ENCODE measurements at regions of chr4 and their contacts with region 1.

Region 1: GRCh38 chr4:186676531-186677161 is 47.0 kb downstream of the FAT1 start:
- DNase-seq: no peak
- ATAC-seq: no peak
- H3K4me3 Mint-ChIP-seq: no peak overlapping the region
- H3K27ac Mint-ChIP-seq: no peak overlapping the region
- H3K4me1 Mint-ChIP-seq: no peaks in the 10 kb centered on the region
- H3K27me3 Mint-ChIP-seq: peaks cover 0 to 1% (median 0%) of the 10 kb centered on the region in 5 donors

Region 2: DNA sequence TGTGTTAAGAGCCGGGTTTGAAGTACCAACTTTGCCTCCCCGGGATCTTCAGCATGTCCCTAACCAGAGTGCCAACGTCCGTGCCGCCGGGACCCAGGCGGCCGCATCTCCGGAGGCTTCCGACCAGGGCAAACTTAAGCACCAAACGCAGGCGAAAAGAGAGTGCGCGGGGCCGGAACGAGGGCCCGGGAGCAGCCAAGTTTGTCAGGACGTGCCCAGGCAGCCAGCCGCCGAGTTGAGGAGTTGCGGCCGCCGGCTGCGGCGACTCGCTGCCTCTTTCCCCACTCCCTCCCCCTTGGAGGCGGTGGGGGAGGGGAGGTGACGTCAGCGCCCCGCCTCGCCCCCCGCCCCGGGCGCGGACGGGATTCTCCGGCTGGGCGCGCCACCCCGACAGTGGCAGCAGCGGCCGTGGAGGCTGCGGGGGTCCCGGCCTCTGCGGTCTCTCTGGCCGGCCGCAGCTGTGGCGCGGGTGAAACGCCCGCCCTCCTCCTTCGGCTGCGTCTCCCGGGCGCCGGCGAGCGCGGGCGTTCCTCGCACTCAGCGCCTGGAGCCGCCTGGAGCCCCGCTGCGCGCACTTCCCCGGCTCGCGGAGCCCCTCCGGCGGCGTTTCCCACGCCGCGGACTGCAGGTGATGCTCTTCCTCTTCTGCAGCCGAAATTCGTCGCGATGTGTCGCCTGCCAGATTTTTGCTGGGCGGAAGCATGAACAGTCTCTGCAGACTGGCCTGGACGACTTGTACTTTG is 50.0 kb after region 1 on chr4:
- POLR2A ChIA-PET with region 1: interaction called, 10 read pairs
- DNase-seq: no peak
- ATAC-seq: no peak
- H3K4me3 Mint-ChIP-seq: peak overlapping the region in 8 of 10 donors; percentile 28 to 67 (median 56)
- H3K27ac Mint-ChIP-seq: no peak overlapping the region
- H3K4me1 Mint-ChIP-seq: peaks cover 0 to 20% (median 13%) of the 10 kb centered on the region in 4 donors
- H3K27me3 Mint-ChIP-seq: peaks cover 27 to 57% (median 51%) of the 10 kb centered on the region in 5 donors

Measured in naive thymus-derived CD8-positive, alpha-beta T cell (primary cell).